Activated CD4-positive, alpha-beta T cell treated with anti-CD3 and anti-CD28 coated beads, Interleukin-2, amount 10 ng/mL, durations not matched to agents 7 days and 5 days (primary cell): ENCODE measurements at regions of chr17 and their contacts with region 1.

Region 1: DNA sequence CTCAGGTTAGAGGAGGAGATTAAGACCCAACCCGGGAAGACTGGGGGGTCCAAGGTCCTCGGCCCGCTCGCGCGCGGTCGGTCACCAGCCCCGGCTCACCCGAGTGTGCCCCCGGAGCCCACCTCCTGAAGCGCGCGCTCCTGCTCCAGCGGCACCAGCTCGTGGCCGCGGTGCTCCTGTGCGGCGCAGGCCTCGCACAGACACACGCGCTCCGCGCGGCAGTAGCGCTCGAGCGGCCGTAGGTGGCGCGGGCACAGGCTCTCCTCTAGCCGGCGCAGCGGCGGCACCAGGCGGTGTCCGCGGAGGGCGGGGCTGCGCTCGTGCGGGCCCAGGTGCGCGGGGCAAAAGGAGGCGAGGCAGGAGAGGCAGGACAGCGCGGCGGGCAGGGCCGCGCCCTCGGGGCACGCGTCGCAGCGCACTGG is 618 bp downstream of the TRIM47 start:
- DNase-seq: peak; percentile 80
- H3K4me3 Mint-ChIP-seq: peak overlapping the region; percentile 99
- H3K27ac Mint-ChIP-seq: peak overlapping the region; percentile 99
- H3K4me1 Mint-ChIP-seq: peaks cover 57% of the 10 kb centered on the region
- H3K27me3 Mint-ChIP-seq: no peaks in the 10 kb centered on the region

Region 2: GRCh38 chr17:75784473-75785015 is 93.2 kb before region 1 on chr17 and contains the start of gene UNK:
- CTCF ChIA-PET with region 1: interaction called, 9 read pairs
- POLR2A ChIA-PET with region 1: interaction called, 10 read pairs
- DNase-seq: peak; percentile 97
- H3K4me3 Mint-ChIP-seq: peak within 1 kb of the TSS; percentile 83
- H3K27ac Mint-ChIP-seq: peak within 1 kb of the TSS; percentile 100
- H3K4me1 Mint-ChIP-seq: peaks cover 46% of the 10 kb centered on the region
- H3K27me3 Mint-ChIP-seq: peaks cover 2% of the 10 kb centered on the region
- total RNA-seq, gene UNK: 27.1 to 28.7 TPM

Region 3: GRCh38 chr17:75822119-75822799 is 55.5 kb before region 1 on chr17:
- CTCF ChIA-PET with region 1: no interaction called
- POLR2A ChIA-PET with region 1: no interaction called
- DNase-seq: peak; percentile 40
- H3K4me3 Mint-ChIP-seq: no peak overlapping the region
- H3K27ac Mint-ChIP-seq: peak overlapping the region; percentile 66
- H3K4me1 Mint-ChIP-seq: peaks cover 27% of the 10 kb centered on the region
- H3K27me3 Mint-ChIP-seq: no peaks in the 10 kb centered on the region

Region 4: GRCh38 chr17:75855310-75856081 is 22.3 kb before region 1 on chr17 and contains the start of gene WBP2:
- CTCF ChIA-PET with region 1: interaction called, 15 read pairs
- POLR2A ChIA-PET with region 1: interaction called, 4 read pairs
- DNase-seq: peak; percentile 99
- H3K4me3 Mint-ChIP-seq: no peak within 1 kb of the TSS
- H3K27ac Mint-ChIP-seq: peak within 1 kb of the TSS; percentile 93
- H3K4me1 Mint-ChIP-seq: peaks cover 36% of the 10 kb centered on the region
- H3K27me3 Mint-ChIP-seq: no peaks in the 10 kb centered on the region
- total RNA-seq, gene WBP2: 76.8 to 83.5 TPM

Region 5: GRCh38 chr17:75864448-75864871 is 13.3 kb before region 1 on chr17:
- CTCF ChIA-PET with region 1: interaction called, 22 read pairs
- POLR2A ChIA-PET with region 1: no interaction called
- DNase-seq: peak; percentile 73
- H3K4me3 Mint-ChIP-seq: peak overlapping the region; percentile 18
- H3K27ac Mint-ChIP-seq: peak overlapping the region; percentile 92
- H3K4me1 Mint-ChIP-seq: peaks cover 30% of the 10 kb centered on the region
- H3K27me3 Mint-ChIP-seq: no peaks in the 10 kb centered on the region

Region 6: GRCh38 chr17:75889454-75889853 is 11.7 kb after region 1 on chr17:
- CTCF ChIA-PET with region 1: interaction called, 10 read pairs
- POLR2A ChIA-PET with region 1: interaction called, 3 read pairs
- DNase-seq: no peak
- H3K4me3 Mint-ChIP-seq: no peak overlapping the region
- H3K27ac Mint-ChIP-seq: no peak overlapping the region
- H3K4me1 Mint-ChIP-seq: peaks cover 8% of the 10 kb centered on the region
- H3K27me3 Mint-ChIP-seq: no peaks in the 10 kb centered on the region

Region 7: GRCh38 chr17:75896415-75897159 is 18.8 kb after region 1 on chr17 and contains the start of gene TRIM65:
- CTCF ChIA-PET with region 1: interaction called, 17 read pairs
- POLR2A ChIA-PET with region 1: no interaction called
- DNase-seq: peak; percentile 69
- H3K4me3 Mint-ChIP-seq: peak within 1 kb of the TSS; percentile 74
- H3K27ac Mint-ChIP-seq: peak within 1 kb of the TSS; percentile 88
- H3K4me1 Mint-ChIP-seq: peaks cover 25% of the 10 kb centered on the region
- H3K27me3 Mint-ChIP-seq: no peaks in the 10 kb centered on the region
- total RNA-seq, gene TRIM65: 26.5 to 28.7 TPM

Region 8: GRCh38 chr17:76107509-76107908 is 229.7 kb after region 1 on chr17:
- CTCF ChIA-PET with region 1: no interaction called
- POLR2A ChIA-PET with region 1: no interaction called
- DNase-seq: no peak
- H3K4me3 Mint-ChIP-seq: no peak overlapping the region
- H3K27ac Mint-ChIP-seq: no peak overlapping the region
- H3K4me1 Mint-ChIP-seq: peaks cover 14% of the 10 kb centered on the region
- H3K27me3 Mint-ChIP-seq: no peaks in the 10 kb centered on the region